Prostate gland (tissue), 2 donors: ENCODE measurements at regions of chr18 and their contacts with region 1.

Region 1: GRCh38 chr18:69958422-69958821 is 10.7 kb upstream of the CD226 start:
- DNase-seq: no peak
- H3K4me3 ChIP-seq: no peak overlapping the region
- H3K27ac ChIP-seq: no peak overlapping the region
- H3K4me1 ChIP-seq: no peaks in the 10 kb centered on the region
- H3K27me3 ChIP-seq: no peaks in the 10 kb centered on the region
- CTCF ChIP-seq: no peak
- POLR2A ChIP-seq: no peak

Region 2: GRCh38 chr18:69845593-69846506 is 112.6 kb before region 1 on chr18:
- intact Hi-C with region 1: loop called (anchors 10 kb)
- DNase-seq: no peak
- H3K4me3 ChIP-seq: no peak overlapping the region
- H3K27ac ChIP-seq: no peak overlapping the region
- H3K4me1 ChIP-seq: no peaks in the 10 kb centered on the region
- H3K27me3 ChIP-seq: no peaks in the 10 kb centered on the region
- CTCF ChIP-seq: no peak
- POLR2A ChIP-seq: no peak